ENCODE measurements at regions of chr5 and their contacts with region 1.

Region 1: GRCh38 chr5:43389679-43390329 is 22.4 kb downstream of the CCL28 start:
- DNase-seq: peak; percentile 22
- H3K4me3 Mint-ChIP-seq: no peak overlapping the region
- H3K27ac Mint-ChIP-seq: no peak overlapping the region
- H3K4me1 Mint-ChIP-seq: peaks cover 19% of the 10 kb centered on the region
- H3K27me3 Mint-ChIP-seq: no peaks in the 10 kb centered on the region

Region 2: GRCh38 chr5:42908509-42909488 is 481.0 kb before region 1 on chr5:
- intact Hi-C with region 1: loop called (anchors 2 kb)
- DNase-seq: peak; percentile 84
- H3K4me3 Mint-ChIP-seq: peak overlapping the region; percentile 81
- H3K27ac Mint-ChIP-seq: peak overlapping the region; percentile 50
- H3K4me1 Mint-ChIP-seq: peaks cover 12% of the 10 kb centered on the region
- H3K27me3 Mint-ChIP-seq: peaks cover 26% of the 10 kb centered on the region

Region 3: GRCh38 chr5:43040287-43041098 is 349.3 kb before region 1 on chr5 and contains the start of gene ANXA2R:
- intact Hi-C with region 1: loop called (anchors 1 kb)
- DNase-seq: peak; percentile 93
- H3K4me3 Mint-ChIP-seq: peak within 1 kb of the TSS; percentile 82
- H3K27ac Mint-ChIP-seq: peak within 1 kb of the TSS; percentile 86
- H3K4me1 Mint-ChIP-seq: peaks cover 59% of the 10 kb centered on the region
- H3K27me3 Mint-ChIP-seq: no peaks in the 10 kb centered on the region
- total RNA-seq, gene ANXA2R: 0.88 and 0.93 TPM in 2 replicates

Region 4: GRCh38 chr5:43073597-43074546 is 315.9 kb before region 1 on chr5:
- intact Hi-C with region 1: loop called (anchors 1 kb)
- DNase-seq: peak; percentile 42
- H3K4me3 Mint-ChIP-seq: no peak overlapping the region
- H3K27ac Mint-ChIP-seq: peak overlapping the region; percentile 41
- H3K4me1 Mint-ChIP-seq: peaks cover 45% of the 10 kb centered on the region
- H3K27me3 Mint-ChIP-seq: no peaks in the 10 kb centered on the region

Region 5: GRCh38 chr5:43227655-43228054 is 162.1 kb before region 1 on chr5:
- intact Hi-C with region 1: loop called (anchors 1 kb)
- DNase-seq: no peak
- H3K4me3 Mint-ChIP-seq: no peak overlapping the region
- H3K27ac Mint-ChIP-seq: no peak overlapping the region
- H3K4me1 Mint-ChIP-seq: no peaks in the 10 kb centered on the region
- H3K27me3 Mint-ChIP-seq: no peaks in the 10 kb centered on the region

Region 6: GRCh38 chr5:43305948-43306565 is 83.7 kb before region 1 on chr5:
- intact Hi-C with region 1: loop called (anchors 1 kb)
- DNase-seq: no peak
- H3K4me3 Mint-ChIP-seq: peak overlapping the region; percentile 33
- H3K27ac Mint-ChIP-seq: peak overlapping the region; percentile 61
- H3K4me1 Mint-ChIP-seq: peaks cover 87% of the 10 kb centered on the region
- H3K27me3 Mint-ChIP-seq: no peaks in the 10 kb centered on the region

Region 7: GRCh38 chr5:44808435-44809214 is 1418.8 kb after region 1 on chr5 and contains the start of gene MRPS30:
- intact Hi-C with region 1: loop called (anchors 10 kb)
- DNase-seq: peak; percentile 91
- H3K4me3 Mint-ChIP-seq: peak within 1 kb of the TSS; percentile 99
- H3K27ac Mint-ChIP-seq: peak within 1 kb of the TSS; percentile 98
- H3K4me1 Mint-ChIP-seq: peaks cover 42% of the 10 kb centered on the region
- H3K27me3 Mint-ChIP-seq: no peaks in the 10 kb centered on the region
- total RNA-seq, gene MRPS30: 62.9 and 63.5 TPM in 2 replicates